Upper lobe of right lung (tissue), 1 donor: ENCODE measurements at regions of chr13 and their contacts with region 1.

Region 1: GRCh38 chr13:28324181-28324789 is 170.6 kb downstream of the FLT1 start:
- DNase-seq: no peak
- ATAC-seq: peak; percentile 94
- H3K4me3 ChIP-seq: no peak overlapping the region
- H3K27ac ChIP-seq: no peak overlapping the region
- H3K4me1 ChIP-seq: peaks cover 6% of the 10 kb centered on the region
- H3K27me3 ChIP-seq: no peaks in the 10 kb centered on the region
- CTCF ChIP-seq: peak; percentile 82

Region 2: GRCh38 chr13:28138012-28138755 is 186.1 kb before region 1 on chr13 and contains the start of gene PAN3:
- intact Hi-C with region 1: no loop called
- DNase-seq: peak; percentile 97
- ATAC-seq: peak; percentile 85
- H3K4me3 ChIP-seq: peak within 1 kb of the TSS; percentile 99
- H3K27ac ChIP-seq: peak within 1 kb of the TSS; percentile 96
- H3K4me1 ChIP-seq: peaks cover 21% of the 10 kb centered on the region
- H3K27me3 ChIP-seq: no peaks in the 10 kb centered on the region
- CTCF ChIP-seq: peak; percentile 27
- total RNA-seq, gene PAN3: 34.3 TPM

Region 3: GRCh38 chr13:28181413-28181812 is 142.9 kb before region 1 on chr13:
- intact Hi-C with region 1: no loop called
- DNase-seq: no peak
- ATAC-seq: no peak
- H3K4me3 ChIP-seq: no peak overlapping the region
- H3K27ac ChIP-seq: no peak overlapping the region
- H3K4me1 ChIP-seq: no peaks in the 10 kb centered on the region
- H3K27me3 ChIP-seq: no peaks in the 10 kb centered on the region
- CTCF ChIP-seq: no peak

Region 4: GRCh38 chr13:28494776-28495537 is 170.7 kb after region 1 on chr13 and contains the start of gene FLT1:
- intact Hi-C with region 1: loop called (anchors 10 kb)
- DNase-seq: peak; percentile 76
- ATAC-seq: peak; percentile 78
- H3K4me3 ChIP-seq: peak within 1 kb of the TSS; percentile 57
- H3K27ac ChIP-seq: peak within 1 kb of the TSS; percentile 60
- H3K4me1 ChIP-seq: peaks cover 30% of the 10 kb centered on the region
- H3K27me3 ChIP-seq: peaks cover 66% of the 10 kb centered on the region
- CTCF ChIP-seq: no peak
- total RNA-seq, gene FLT1: 72.4 TPM

Region 5: GRCh38 chr13:28636674-28637317 is 312.5 kb after region 1 on chr13:
- intact Hi-C with region 1: loop called (anchors 10 kb)
- DNase-seq: no peak
- ATAC-seq: peak; percentile 97
- H3K4me3 ChIP-seq: no peak overlapping the region
- H3K27ac ChIP-seq: no peak overlapping the region
- H3K4me1 ChIP-seq: peaks cover 4% of the 10 kb centered on the region
- H3K27me3 ChIP-seq: no peaks in the 10 kb centered on the region
- CTCF ChIP-seq: peak; percentile 91